Adrenal gland (tissue), 19 donors: ENCODE measurements at regions of chr1 and their contacts with region 1.

Region 1: DNA sequence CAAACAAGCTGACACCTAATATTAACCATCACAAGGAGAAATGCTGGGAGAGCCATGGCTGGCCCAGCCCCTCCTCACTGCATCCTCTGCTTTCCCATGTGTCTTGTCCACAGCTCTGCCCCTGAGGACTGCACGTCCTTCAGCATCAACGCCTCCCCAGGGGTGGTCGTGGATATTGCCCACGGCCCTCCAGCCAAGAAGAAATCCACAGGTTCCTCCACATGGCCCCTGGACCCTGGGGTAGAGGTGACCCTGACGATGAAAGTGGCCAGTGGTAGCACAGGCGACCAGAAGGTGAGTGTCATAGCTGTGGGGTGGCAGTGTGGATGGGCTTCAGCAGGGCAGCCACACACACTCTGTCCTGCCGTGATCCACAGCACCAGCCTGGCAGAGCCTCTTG is 22.9 kb downstream of the PADI4 start:
- DNase-seq: no peak
- H3K4me3 ChIP-seq: no peak overlapping the region
- H3K27ac ChIP-seq: no peak overlapping the region
- H3K4me1 ChIP-seq: no peaks in the 10 kb centered on the region
- H3K27me3 ChIP-seq: peaks cover 10% of the 10 kb centered on the region
- CTCF ChIP-seq: no peak
- POLR2A ChIP-seq: no peak

Region 2: GRCh38 chr1:17119773-17120480 is 210.9 kb before region 1 on chr1:
- intact Hi-C with region 1: loop called in 1 of 2 experiments (anchors 5 kb)
- DNase-seq: peak in 2 of 7 donors; percentile 14 to 37
- H3K4me3 ChIP-seq: peak overlapping the region in 1 of 4 donors; percentile 46
- H3K27ac ChIP-seq: no peak overlapping the region
- H3K4me1 ChIP-seq: no peaks in the 10 kb centered on the region
- H3K27me3 ChIP-seq: peaks cover 17% of the 10 kb centered on the region
- CTCF ChIP-seq: no peak
- POLR2A ChIP-seq: no peak

Region 3: GRCh38 chr1:17527036-17527914 is 196.4 kb after region 1 on chr1:
- intact Hi-C with region 1: no loop called
- DNase-seq: peak in 6 of 7 donors; percentile 54 to 78 (median 66)
- H3K4me3 ChIP-seq: no peak overlapping the region
- H3K27ac ChIP-seq: peak overlapping the region in 4 of 5 donors; percentile 41 to 82 (median 64)
- H3K4me1 ChIP-seq: peaks cover 18 to 21% of the 10 kb centered on the region in 2 donors
- H3K27me3 ChIP-seq: no peaks in the 10 kb centered on the region
- CTCF ChIP-seq: no peak
- POLR2A ChIP-seq: no peak